Activated naive CD8-positive, alpha-beta T cell treated with anti-CD3 and anti-CD28 coated beads, Interleukin-2, amount 10 ng/mL, durations not matched to agents 7 days and 5 days (primary cell): ENCODE measurements at regions of chr2 and their contacts with region 1.

Region 1: DNA sequence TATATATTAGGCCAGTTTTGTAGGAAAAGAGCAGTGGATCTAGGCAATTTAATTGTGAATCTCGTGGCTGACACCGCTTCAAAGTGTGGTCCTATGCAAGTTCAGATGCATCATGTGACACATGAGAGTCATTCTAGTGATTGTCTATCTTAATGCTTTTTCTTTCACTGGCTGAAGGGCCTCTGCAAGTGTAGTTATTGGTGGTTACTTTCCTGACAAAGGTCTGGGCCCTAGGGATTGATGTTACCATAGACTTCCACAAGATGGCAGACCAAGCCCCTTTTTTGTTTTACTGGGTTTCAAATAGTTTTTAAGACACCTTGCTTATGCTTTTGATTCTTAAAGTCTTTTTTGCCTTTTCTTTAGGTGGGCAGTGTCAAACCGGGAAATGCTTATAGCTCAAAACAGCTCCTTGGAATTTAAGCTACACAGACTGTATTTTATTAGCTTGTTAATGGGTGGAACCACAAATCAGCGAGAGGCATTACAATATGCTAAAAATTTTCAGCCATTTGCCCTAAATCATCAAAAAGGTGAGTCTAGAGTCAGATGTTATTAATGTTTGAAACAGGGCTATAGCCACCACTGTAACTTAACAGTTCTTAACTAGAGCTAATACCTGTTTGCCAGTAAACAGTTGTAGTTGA is 25.9 kb downstream of the CD8A start:
- DNase-seq: no peak
- ATAC-seq: peak; percentile 74
- H3K4me3 Mint-ChIP-seq: peak overlapping the region; percentile 23
- H3K27ac Mint-ChIP-seq: peak overlapping the region; percentile 74
- H3K4me1 Mint-ChIP-seq: peaks cover 27% of the 10 kb centered on the region
- H3K27me3 Mint-ChIP-seq: no peaks in the 10 kb centered on the region

Region 2: GRCh38 chr2:86671337-86671981 is 93.3 kb before region 1 on chr2:
- POLR2A ChIA-PET with region 1: no interaction called
- DNase-seq: no peak
- ATAC-seq: no peak
- H3K4me3 Mint-ChIP-seq: no peak overlapping the region
- H3K27ac Mint-ChIP-seq: no peak overlapping the region
- H3K4me1 Mint-ChIP-seq: no peaks in the 10 kb centered on the region
- H3K27me3 Mint-ChIP-seq: peaks cover 2% of the 10 kb centered on the region

Region 3: DNA sequence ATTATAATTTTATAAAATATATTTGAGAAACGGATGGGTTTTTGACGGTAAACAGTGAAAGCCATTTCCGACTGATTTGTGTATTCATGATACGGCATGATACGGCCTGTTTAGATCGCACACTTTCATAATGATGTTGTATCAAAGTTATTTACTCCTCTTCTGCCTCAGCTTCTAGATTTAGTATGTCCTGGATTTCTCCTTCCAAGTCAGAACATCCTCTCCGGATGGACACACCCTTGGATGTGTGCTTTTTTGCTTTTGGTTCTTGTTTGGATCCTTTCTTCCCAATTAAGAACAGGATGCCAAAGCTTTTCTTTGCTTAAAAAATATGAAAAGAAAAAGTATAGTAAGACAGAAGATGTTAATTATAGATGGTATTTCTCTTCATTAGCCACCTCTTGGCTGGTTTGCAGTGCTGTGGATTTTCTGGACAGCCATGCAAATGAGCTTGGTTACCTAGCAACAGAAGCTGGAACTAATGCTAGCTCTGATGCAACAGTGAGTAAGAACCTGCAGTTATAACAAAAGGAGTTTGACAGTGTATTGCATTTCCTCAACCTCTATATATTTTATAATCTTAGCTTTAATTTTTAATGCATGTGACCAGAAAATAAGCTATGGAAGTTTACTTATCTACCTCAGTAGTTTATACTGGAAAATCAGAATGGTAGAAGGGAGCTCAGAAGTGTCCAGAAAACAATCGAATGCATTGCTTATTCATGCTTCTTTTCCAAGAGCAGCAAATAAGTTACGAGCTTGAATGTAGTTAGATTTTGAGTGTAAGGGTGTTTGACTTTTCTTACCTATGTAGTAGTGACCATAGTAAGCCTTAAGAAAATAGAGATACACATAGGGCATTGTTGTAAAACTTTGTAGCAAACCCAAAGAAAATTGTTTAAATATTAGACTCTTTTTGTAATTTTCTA is 16.8 kb before region 1 on chr2:
- POLR2A ChIA-PET with region 1: no interaction called
- DNase-seq: no peak
- ATAC-seq: no peak
- H3K4me3 Mint-ChIP-seq: no peak overlapping the region
- H3K27ac Mint-ChIP-seq: no peak overlapping the region
- H3K4me1 Mint-ChIP-seq: peaks cover 15% of the 10 kb centered on the region
- H3K27me3 Mint-ChIP-seq: no peaks in the 10 kb centered on the region

Region 4: GRCh38 chr2:86783615-86784339 is 19.0 kb after region 1 on chr2:
- POLR2A ChIA-PET with region 1: interaction called, 25 read pairs
- DNase-seq: no peak
- ATAC-seq: no peak
- H3K4me3 Mint-ChIP-seq: peak overlapping the region; percentile 93
- H3K27ac Mint-ChIP-seq: peak overlapping the region; percentile 99
- H3K4me1 Mint-ChIP-seq: peaks cover 58% of the 10 kb centered on the region
- H3K27me3 Mint-ChIP-seq: no peaks in the 10 kb centered on the region

Region 5: GRCh38 chr2:86808315-86809161 is 43.8 kb after region 1 on chr2:
- POLR2A ChIA-PET with region 1: interaction called, 31 read pairs
- DNase-seq: peak; percentile 98
- ATAC-seq: peak; percentile 74
- H3K4me3 Mint-ChIP-seq: peak overlapping the region; percentile 93
- H3K27ac Mint-ChIP-seq: peak overlapping the region; percentile 99
- H3K4me1 Mint-ChIP-seq: peaks cover 55% of the 10 kb centered on the region
- H3K27me3 Mint-ChIP-seq: no peaks in the 10 kb centered on the region